Endothelial cell of umbilical vein (primary cell): ENCODE measurements at regions of chr1 and their contacts with region 1.

Region 1: GRCh38 chr1:145845514-145846161 is at the start of gene NUDT17:
- DNase-seq: peak; percentile 71
- H3K4me3 ChIP-seq: peak within 1 kb of the TSS; percentile 37 to 59 (median 58)
- H3K27ac ChIP-seq: peak within 1 kb of the TSS; percentile 28
- H3K4me1 ChIP-seq: peaks cover 24% of the 10 kb centered on the region
- H3K27me3 ChIP-seq: no peaks in the 10 kb centered on the region
- CTCF ChIP-seq: peak; percentile 96 to 97
- POLR2A ChIP-seq: peak; percentile 75
- total RNA-seq, gene NUDT17: 3.6 and 5.1 TPM in 2 replicates

Region 2: GRCh38 chr1:145751491-145752037 is 94.1 kb before region 1 on chr1:
- CTCF ChIA-PET with region 1: interaction called, 13 read pairs
- POLR2A ChIA-PET with region 1: no interaction called
- dilution Hi-C with region 1: no loop called
- intact Hi-C with region 1: no loop called
- DNase-seq: peak; percentile 72
- H3K4me3 ChIP-seq: no peak overlapping the region
- H3K27ac ChIP-seq: peak overlapping the region; percentile 33
- H3K4me1 ChIP-seq: peaks cover 13% of the 10 kb centered on the region
- H3K27me3 ChIP-seq: no peaks in the 10 kb centered on the region
- CTCF ChIP-seq: no peak
- POLR2A ChIP-seq: no peak

Region 3: DNA sequence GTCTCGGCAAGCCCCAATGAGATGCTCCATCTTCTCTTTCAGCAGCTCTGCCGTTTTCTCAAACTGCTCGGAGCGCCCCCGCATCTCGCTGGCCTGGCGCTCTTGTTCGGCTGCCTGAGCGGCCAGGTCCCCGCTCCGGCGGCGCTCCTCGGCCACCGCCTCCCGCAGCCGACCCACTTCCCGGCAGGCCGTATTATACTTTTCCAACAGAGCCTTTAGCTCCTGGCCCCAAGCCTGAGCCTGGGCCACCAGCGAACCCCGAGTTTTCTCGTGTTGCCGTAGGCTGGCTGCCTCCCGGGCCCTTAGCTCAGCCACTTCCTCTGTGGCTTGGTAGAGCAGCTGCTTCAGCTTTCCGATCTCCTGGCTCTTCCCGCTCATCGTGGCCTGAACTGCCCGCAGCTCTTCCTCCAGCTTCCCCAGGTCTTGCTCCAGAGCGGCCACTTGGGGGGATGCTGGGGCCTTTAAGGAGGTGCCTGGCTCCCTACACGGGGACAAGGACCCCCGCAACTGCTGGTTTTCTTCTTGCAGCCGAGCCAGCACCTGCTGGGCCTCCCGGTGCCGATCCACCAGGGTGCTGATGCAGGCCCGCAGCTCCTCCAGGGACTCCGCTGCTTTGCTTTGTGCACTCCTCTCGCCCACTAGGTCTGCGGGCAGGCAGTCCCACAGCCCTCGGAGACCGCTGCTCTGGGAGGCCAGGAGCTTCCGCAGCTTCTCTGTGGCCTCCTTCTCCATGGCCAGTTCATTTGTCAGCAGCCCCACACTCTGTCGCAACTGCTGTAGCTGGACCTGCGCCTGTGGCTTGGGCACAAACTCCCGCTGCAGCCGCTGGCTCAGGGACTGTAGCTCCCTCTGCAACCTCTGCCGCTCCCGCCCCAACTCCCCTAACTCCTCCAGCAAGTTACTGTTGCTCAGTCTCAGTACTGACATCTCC is 26.6 kb after region 1 on chr1:
- CTCF ChIA-PET with region 1: interaction called, 10 read pairs
- POLR2A ChIA-PET with region 1: no interaction called
- dilution Hi-C with region 1: no loop called
- intact Hi-C with region 1: no loop called
- DNase-seq: peak; percentile 37
- H3K4me3 ChIP-seq: peak overlapping the region in 1 of 3 experiments; percentile 35
- H3K27ac ChIP-seq: no peak overlapping the region
- H3K4me1 ChIP-seq: peaks cover 8% of the 10 kb centered on the region
- H3K27me3 ChIP-seq: peaks cover 0 to 3% of the 10 kb centered on the region in 2 experiments
- CTCF ChIP-seq: no peak
- POLR2A ChIP-seq: no peak

Region 4: DNA sequence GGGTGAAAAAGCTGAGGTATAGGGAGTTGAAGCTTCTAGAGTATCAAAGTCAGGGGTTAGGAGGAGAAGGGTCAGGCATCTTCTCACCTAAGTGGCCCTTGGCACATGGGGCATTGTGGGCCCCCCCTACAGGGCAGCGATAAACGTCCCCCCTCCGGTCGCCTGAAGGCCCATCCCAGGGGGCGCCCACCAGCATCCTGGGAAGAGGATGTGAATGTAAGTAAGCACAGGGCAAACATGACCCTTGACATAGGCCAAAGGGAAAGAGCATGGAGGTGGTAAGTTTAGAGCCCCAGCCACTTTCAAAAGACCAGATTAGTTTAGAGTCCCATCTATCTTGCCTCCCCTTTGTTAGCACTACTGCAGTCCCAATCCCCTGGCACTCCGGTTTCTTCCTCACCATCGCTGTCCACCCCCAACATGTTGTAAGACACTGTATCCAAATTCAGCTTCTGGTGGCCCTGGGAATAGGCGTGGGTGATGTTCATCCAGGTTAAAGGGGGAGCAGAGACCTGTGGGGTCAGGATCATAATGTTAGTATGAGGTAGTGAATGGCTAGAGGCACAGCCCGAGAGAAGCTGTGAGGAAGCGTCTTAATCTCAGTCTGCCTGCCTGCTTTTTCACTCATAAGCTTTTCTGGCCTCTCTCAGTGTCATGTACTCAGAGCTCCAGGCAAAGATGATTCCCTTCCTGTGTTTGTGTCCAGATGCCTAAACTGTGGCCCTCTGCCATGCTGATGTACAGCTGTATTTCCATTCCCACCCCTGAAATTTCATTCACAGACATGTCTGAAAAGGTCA is 61.5 kb after region 1 on chr1:
- CTCF ChIA-PET with region 1: interaction called, 151 read pairs
- POLR2A ChIA-PET with region 1: no interaction called
- dilution Hi-C with region 1: no loop called
- intact Hi-C with region 1: loop called (anchors 1 kb)
- DNase-seq: peak; percentile 59
- H3K4me3 ChIP-seq: no peak overlapping the region
- H3K27ac ChIP-seq: peak overlapping the region; percentile 39
- H3K4me1 ChIP-seq: peaks cover 25% of the 10 kb centered on the region
- H3K27me3 ChIP-seq: no peaks in the 10 kb centered on the region
- CTCF ChIP-seq: no peak
- POLR2A ChIP-seq: no peak

Region 5: DNA sequence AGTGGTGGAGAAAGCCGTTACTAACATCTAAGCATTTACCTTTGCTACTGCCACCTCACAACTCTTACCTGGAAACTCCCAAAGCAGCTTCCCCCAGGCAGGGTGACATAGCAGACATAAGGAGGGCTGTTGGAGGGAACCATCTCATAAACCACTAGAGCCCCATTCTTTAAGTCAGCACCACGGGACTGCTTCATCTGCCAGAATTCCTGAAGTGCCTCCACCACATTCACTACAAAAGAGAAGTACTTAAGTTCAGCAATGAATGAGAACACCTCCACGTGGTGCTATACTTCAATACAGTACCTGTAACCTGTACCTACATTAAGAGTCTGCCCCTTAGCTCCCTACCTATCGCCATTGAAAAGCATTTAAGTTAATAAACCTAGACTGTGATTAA is 101.9 kb after region 1 on chr1:
- CTCF ChIA-PET with region 1: no interaction called
- POLR2A ChIA-PET with region 1: no interaction called
- dilution Hi-C with region 1: no loop called
- intact Hi-C with region 1: no loop called
- DNase-seq: no peak
- H3K4me3 ChIP-seq: no peak overlapping the region
- H3K27ac ChIP-seq: no peak overlapping the region
- H3K4me1 ChIP-seq: no peaks in the 10 kb centered on the region
- H3K27me3 ChIP-seq: no peaks in the 10 kb centered on the region
- CTCF ChIP-seq: no peak
- POLR2A ChIP-seq: no peak

Region 6: GRCh38 chr1:145957443-145958319 is 112.0 kb after region 1 on chr1 and contains the start of gene LIX1L:
- CTCF ChIA-PET with region 1: interaction called, 14 read pairs
- POLR2A ChIA-PET with region 1: no interaction called
- dilution Hi-C with region 1: no loop called
- intact Hi-C with region 1: no loop called
- DNase-seq: peak; percentile 97
- H3K4me3 ChIP-seq: peak within 1 kb of the TSS; percentile 71 to 87 (median 74)
- H3K27ac ChIP-seq: peak within 1 kb of the TSS; percentile 96
- H3K4me1 ChIP-seq: peaks cover 50% of the 10 kb centered on the region
- H3K27me3 ChIP-seq: no peaks in the 10 kb centered on the region
- CTCF ChIP-seq: no peak
- POLR2A ChIP-seq: peak; percentile 98
- total RNA-seq, gene LIX1L: 54.9 and 55.6 TPM in 2 replicates

Region 7: DNA sequence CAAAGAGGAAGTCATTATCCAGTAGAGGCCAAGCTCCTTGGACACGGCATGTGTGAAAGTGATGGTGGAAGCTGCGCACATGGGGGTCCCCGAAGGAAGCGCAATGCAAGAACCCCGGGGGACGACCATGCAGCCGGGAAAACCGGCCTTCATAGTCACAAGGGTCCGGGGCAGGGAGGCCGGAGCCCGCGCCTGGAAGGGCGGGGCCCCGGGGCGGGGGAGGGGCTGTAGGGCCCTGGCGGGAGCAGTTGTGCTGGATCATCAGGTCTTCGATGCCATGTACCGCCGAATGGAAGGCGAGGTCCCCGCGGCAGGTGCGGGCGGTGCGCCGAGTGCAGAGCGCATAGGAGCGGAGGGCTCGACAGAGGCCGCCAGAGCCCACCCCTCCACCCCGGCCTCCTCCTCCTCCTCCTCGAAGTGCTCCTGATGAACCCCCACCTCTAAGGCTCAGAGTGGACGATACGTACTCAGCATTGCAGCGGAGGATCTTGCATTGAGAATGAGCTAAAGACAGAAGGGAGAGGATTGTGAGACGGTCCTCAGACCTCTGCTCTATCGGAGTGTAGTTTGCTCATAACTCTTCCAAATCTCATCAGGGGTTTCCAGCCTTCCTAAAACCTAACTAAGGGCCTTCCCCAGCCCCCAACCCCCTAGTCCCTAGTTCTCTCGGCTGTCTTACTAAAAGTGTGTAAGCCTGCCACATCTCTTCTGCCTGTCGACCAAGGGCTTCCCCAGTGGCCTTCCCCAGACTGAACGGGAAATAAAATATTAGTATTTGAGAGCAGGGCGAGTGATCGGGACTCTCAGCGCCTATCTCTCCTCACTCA is 173.8 kb after region 1 on chr1:
- CTCF ChIA-PET with region 1: interaction called, 27 read pairs
- POLR2A ChIA-PET with region 1: no interaction called
- dilution Hi-C with region 1: no loop called
- intact Hi-C with region 1: no loop called
- DNase-seq: no peak
- H3K4me3 ChIP-seq: no peak overlapping the region
- H3K27ac ChIP-seq: no peak overlapping the region
- H3K4me1 ChIP-seq: no peaks in the 10 kb centered on the region
- H3K27me3 ChIP-seq: peaks cover 44 to 55% of the 10 kb centered on the region in 2 experiments
- CTCF ChIP-seq: no peak
- POLR2A ChIP-seq: no peak